GM12878 (cell line): ENCODE measurements at regions of chr5 and their contacts with region 1.

Region 1: GRCh38 chr5:160439205-160439600 is 17.5 kb downstream of the PTTG1 start:
- DNase-seq: peak; percentile 89
- ATAC-seq: peak; percentile 75
- H3K4me3 ChIP-seq: peak overlapping the region; percentile 70
- H3K27ac ChIP-seq: peak overlapping the region; percentile 82
- H3K4me1 ChIP-seq: peaks cover 54% of the 10 kb centered on the region
- H3K27me3 ChIP-seq: no peaks in the 10 kb centered on the region
- CTCF ChIP-seq: peak; percentile 83 to 95 (median 88)
- EP300 ChIP-seq: no peak; a peak in 1 of 4 replicates
- POLR2A ChIP-seq: peak; percentile 50; the same call in 1 of the 2 replicates
- RAD21 ChIP-seq: peak; percentile 84

Region 2: GRCh38 chr5:160399402-160400353 is 39.5 kb before region 1 on chr5 and contains the start of gene FAM200C:
- CTCF ChIA-PET with region 1: interaction called, 6 read pairs
- POLR2A ChIA-PET with region 1: interaction called, 10 read pairs
- RAD21 ChIA-PET with region 1: interaction called, 3 read pairs
- SMC1A ChIA-PET with region 1: interaction called, 11 read pairs
- in situ Hi-C with region 1: no loop called
- intact Hi-C with region 1: no loop called
- DNase-seq: peak; percentile 59
- ATAC-seq: peak; percentile 92
- H3K4me3 ChIP-seq: peak within 1 kb of the TSS; percentile 75
- H3K27ac ChIP-seq: peak within 1 kb of the TSS; percentile 84
- H3K4me1 ChIP-seq: no peaks in the 10 kb centered on the region; the same call in 1 of the 2 replicates
- H3K27me3 ChIP-seq: no peaks in the 10 kb centered on the region
- CTCF ChIP-seq: no peak
- EP300 ChIP-seq: 0 out of 4 replicates have a peak, but pooled peaks of 1 of the 2 experiments have one; percentile 7
- POLR2A ChIP-seq: peak; percentile 89
- RAD21 ChIP-seq: no peak
- polyA plus RNA-seq, gene FAM200C: 1.0 to 1.2 TPM

Region 3: GRCh38 chr5:160458806-160459800 is 19.9 kb after region 1 on chr5:
- CTCF ChIA-PET with region 1: interaction called, 230 read pairs
- POLR2A ChIA-PET with region 1: interaction called, 156 read pairs
- RAD21 ChIA-PET with region 1: interaction called, 329 read pairs
- SMC1A ChIA-PET with region 1: interaction called, 511 read pairs
- in situ Hi-C with region 1: no loop called
- intact Hi-C with region 1: loop called (anchors 1 kb)
- DNase-seq: peak; percentile 92
- ATAC-seq: peak; percentile 77
- H3K4me3 ChIP-seq: no peak overlapping the region
- H3K27ac ChIP-seq: peak overlapping the region; percentile 70
- H3K4me1 ChIP-seq: peaks cover 45% of the 10 kb centered on the region
- H3K27me3 ChIP-seq: no peaks in the 10 kb centered on the region
- CTCF ChIP-seq: no peak
- EP300 ChIP-seq: peak; percentile 92 to 98; a peak in 3 of 4 replicates
- POLR2A ChIP-seq: peak; percentile 60; the same call in 1 of the 2 replicates
- RAD21 ChIP-seq: no peak

Region 4: GRCh38 chr5:160486573-160486972 is 47.4 kb after region 1 on chr5:
- CTCF ChIA-PET with region 1: interaction called, 209 read pairs
- POLR2A ChIA-PET with region 1: interaction called, 5 read pairs
- RAD21 ChIA-PET with region 1: interaction called, 107 read pairs
- SMC1A ChIA-PET with region 1: interaction called, 219 read pairs
- in situ Hi-C with region 1: no loop called
- intact Hi-C with region 1: no loop called
- DNase-seq: no peak
- ATAC-seq: peak; percentile 82
- H3K4me3 ChIP-seq: no peak overlapping the region
- H3K27ac ChIP-seq: peak overlapping the region; percentile 53
- H3K4me1 ChIP-seq: peaks cover 21% of the 10 kb centered on the region
- H3K27me3 ChIP-seq: no peaks in the 10 kb centered on the region
- CTCF ChIP-seq: no peak
- EP300 ChIP-seq: peak; percentile 29 to 52; a peak in 2 of 4 replicates
- POLR2A ChIP-seq: no peak
- RAD21 ChIP-seq: no peak

Region 5: DNA sequence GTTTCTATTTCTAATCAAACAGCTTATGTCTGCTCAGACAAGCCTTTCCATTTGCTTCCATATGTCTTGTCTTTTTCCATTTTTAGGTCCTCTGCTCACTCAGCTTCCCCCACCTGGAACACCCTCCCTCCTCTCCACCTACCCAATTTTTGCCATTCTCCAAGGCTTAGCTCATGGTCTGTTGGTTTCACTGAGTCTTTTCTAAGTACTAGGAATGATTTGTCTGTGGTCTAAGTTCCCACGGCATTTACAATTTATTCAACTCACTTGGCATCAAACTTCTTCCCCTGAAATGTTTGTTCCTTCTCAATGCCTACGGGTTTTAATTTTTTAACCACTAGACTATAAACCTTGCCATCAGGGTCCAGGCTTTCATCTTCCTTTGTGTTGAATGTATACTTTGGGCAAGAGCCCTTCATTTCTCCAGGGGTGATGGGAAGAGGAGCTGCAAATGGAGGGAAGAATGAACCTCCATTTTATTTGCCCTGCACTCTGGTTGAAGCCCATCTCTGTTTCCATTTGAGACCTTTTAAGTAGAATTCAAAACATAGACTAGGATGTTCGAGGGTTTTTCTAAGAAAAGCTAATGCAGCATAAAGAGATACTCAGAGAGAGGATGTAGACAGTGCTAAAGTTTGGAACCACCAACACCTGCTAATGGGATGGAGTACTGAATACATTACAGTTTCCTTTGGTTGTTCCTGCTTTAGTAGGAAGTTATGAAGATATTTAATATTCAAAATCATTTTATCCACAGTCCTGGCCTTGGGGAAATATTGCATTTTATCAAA is 86.5 kb after region 1 on chr5:
- CTCF ChIA-PET with region 1: interaction called, 13 read pairs
- POLR2A ChIA-PET with region 1: no interaction called
- RAD21 ChIA-PET with region 1: no interaction called
- SMC1A ChIA-PET with region 1: interaction called, 3 read pairs
- in situ Hi-C with region 1: no loop called
- intact Hi-C with region 1: no loop called
- DNase-seq: no peak
- ATAC-seq: no peak
- H3K4me3 ChIP-seq: no peak overlapping the region
- H3K27ac ChIP-seq: no peak overlapping the region
- H3K4me1 ChIP-seq: no peaks in the 10 kb centered on the region
- H3K27me3 ChIP-seq: no peaks in the 10 kb centered on the region
- CTCF ChIP-seq: no peak
- EP300 ChIP-seq: no peak
- POLR2A ChIP-seq: no peak
- RAD21 ChIP-seq: no peak

Region 6: GRCh38 chr5:160675988-160676387 is 236.8 kb after region 1 on chr5:
- CTCF ChIA-PET with region 1: interaction called, 14 read pairs
- POLR2A ChIA-PET with region 1: no interaction called
- RAD21 ChIA-PET with region 1: no interaction called
- SMC1A ChIA-PET with region 1: interaction called, 10 read pairs
- in situ Hi-C with region 1: no loop called
- intact Hi-C with region 1: loop called (anchors 5 kb)
- DNase-seq: no peak
- ATAC-seq: peak; percentile 76
- H3K4me3 ChIP-seq: no peak overlapping the region
- H3K27ac ChIP-seq: no peak overlapping the region
- H3K4me1 ChIP-seq: no peaks in the 10 kb centered on the region
- H3K27me3 ChIP-seq: no peaks in the 10 kb centered on the region; a peak in 1 of 4 replicates
- CTCF ChIP-seq: peak in 1 of 3 experiments; percentile 42; a peak in 3 of 6 replicates
- EP300 ChIP-seq: no peak
- POLR2A ChIP-seq: no peak
- RAD21 ChIP-seq: peak; percentile 44

Region 7: GRCh38 chr5:160959804-160960203 is 520.6 kb after region 1 on chr5:
- CTCF ChIA-PET with region 1: no interaction called
- POLR2A ChIA-PET with region 1: no interaction called
- RAD21 ChIA-PET with region 1: interaction called, 3 read pairs
- SMC1A ChIA-PET with region 1: no interaction called
- in situ Hi-C with region 1: no loop called
- intact Hi-C with region 1: loop called (anchors 10 kb)
- DNase-seq: peak; percentile 62
- ATAC-seq: peak; percentile 76
- H3K4me3 ChIP-seq: no peak overlapping the region
- H3K27ac ChIP-seq: no peak overlapping the region
- H3K4me1 ChIP-seq: no peaks in the 10 kb centered on the region; the same call in 1 of the 2 replicates
- H3K27me3 ChIP-seq: no peaks in the 10 kb centered on the region
- CTCF ChIP-seq: no peak
- EP300 ChIP-seq: 0 out of 4 replicates have a peak, but pooled peaks of 1 of the 2 experiments have one; percentile 12
- POLR2A ChIP-seq: no peak
- RAD21 ChIP-seq: no peak